Activated CD4-positive, alpha-beta T cell treated with anti-CD3 and anti-CD28 coated beads, Interleukin-2, amount 10 ng/mL, durations not matched to agents 24 days and 14 days (primary cell): ENCODE measurements at regions of chr12 and their contacts with region 1.

Region 1: GRCh38 chr12:57452937-57453509 is 2.1 kb upstream of the INHBE start:
- DNase-seq: peak; percentile 87
- H3K4me3 Mint-ChIP-seq: no peak overlapping the region
- H3K27ac Mint-ChIP-seq: no peak overlapping the region
- H3K4me1 Mint-ChIP-seq: peaks cover 13% of the 10 kb centered on the region
- H3K27me3 Mint-ChIP-seq: no peaks in the 10 kb centered on the region

Region 2: DNA sequence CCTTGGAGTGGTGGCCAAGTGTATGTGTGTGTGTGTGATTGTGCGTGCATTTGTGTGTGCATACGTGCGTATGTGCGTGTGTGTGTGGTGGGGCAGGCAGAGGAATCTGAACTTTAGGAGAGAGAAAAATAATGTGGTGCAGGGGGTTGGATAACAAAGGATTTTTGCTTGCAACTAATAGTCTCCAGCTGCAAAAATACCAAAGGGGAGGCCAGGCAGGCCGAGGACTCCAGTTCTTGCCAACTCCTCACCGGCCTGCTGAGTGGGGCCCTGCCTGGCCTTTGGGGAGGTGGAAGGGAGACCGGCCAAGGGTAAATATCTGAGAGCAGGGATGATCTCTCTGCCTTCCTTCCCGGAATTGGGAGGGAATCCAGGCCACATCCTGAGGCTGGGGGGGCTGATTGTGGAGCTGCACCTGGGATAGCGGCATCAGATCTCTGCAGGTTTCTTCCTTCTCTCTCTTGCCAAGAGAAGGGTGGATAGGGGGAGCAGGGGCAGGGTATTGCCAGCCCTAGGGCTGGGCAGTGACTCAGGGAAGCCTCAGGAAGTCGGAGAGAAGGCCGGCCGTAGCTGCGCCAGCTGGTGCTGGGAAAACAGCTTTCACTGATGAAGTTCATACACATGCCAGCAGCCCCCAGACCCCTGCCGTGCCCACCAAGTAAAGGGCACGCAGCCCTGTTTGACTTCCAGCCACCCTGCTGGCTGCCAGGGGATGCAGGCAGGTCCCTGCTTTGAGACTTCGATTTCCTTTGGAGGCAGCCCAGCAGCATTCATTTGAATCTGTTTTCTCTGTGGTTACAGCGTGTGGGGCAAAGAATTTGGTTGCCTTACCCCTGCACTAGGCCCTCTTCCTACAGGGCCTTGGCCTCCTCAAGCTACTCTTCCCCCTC is 301.0 kb before region 1 on chr12:
- intact Hi-C with region 1: no loop called
- DNase-seq: no peak
- H3K4me3 Mint-ChIP-seq: no peak overlapping the region
- H3K27ac Mint-ChIP-seq: no peak overlapping the region
- H3K4me1 Mint-ChIP-seq: no peaks in the 10 kb centered on the region
- H3K27me3 Mint-ChIP-seq: no peaks in the 10 kb centered on the region

Region 3: GRCh38 chr12:57175428-57176138 is 277.4 kb before region 1 on chr12:
- intact Hi-C with region 1: no loop called
- DNase-seq: peak; percentile 81
- H3K4me3 Mint-ChIP-seq: no peak overlapping the region
- H3K27ac Mint-ChIP-seq: no peak overlapping the region
- H3K4me1 Mint-ChIP-seq: no peaks in the 10 kb centered on the region
- H3K27me3 Mint-ChIP-seq: no peaks in the 10 kb centered on the region

Region 4: GRCh38 chr12:57263096-57263495 is 189.9 kb before region 1 on chr12:
- intact Hi-C with region 1: loop called (anchors 1 kb)
- DNase-seq: no peak
- H3K4me3 Mint-ChIP-seq: no peak overlapping the region
- H3K27ac Mint-ChIP-seq: no peak overlapping the region
- H3K4me1 Mint-ChIP-seq: peaks cover 5% of the 10 kb centered on the region
- H3K27me3 Mint-ChIP-seq: no peaks in the 10 kb centered on the region

Region 5: GRCh38 chr12:57309420-57309819 is 143.6 kb before region 1 on chr12:
- intact Hi-C with region 1: loop called (anchors 1 kb)
- DNase-seq: no peak
- H3K4me3 Mint-ChIP-seq: no peak overlapping the region
- H3K27ac Mint-ChIP-seq: no peak overlapping the region
- H3K4me1 Mint-ChIP-seq: peaks cover 6% of the 10 kb centered on the region
- H3K27me3 Mint-ChIP-seq: no peaks in the 10 kb centered on the region

Region 6: DNA sequence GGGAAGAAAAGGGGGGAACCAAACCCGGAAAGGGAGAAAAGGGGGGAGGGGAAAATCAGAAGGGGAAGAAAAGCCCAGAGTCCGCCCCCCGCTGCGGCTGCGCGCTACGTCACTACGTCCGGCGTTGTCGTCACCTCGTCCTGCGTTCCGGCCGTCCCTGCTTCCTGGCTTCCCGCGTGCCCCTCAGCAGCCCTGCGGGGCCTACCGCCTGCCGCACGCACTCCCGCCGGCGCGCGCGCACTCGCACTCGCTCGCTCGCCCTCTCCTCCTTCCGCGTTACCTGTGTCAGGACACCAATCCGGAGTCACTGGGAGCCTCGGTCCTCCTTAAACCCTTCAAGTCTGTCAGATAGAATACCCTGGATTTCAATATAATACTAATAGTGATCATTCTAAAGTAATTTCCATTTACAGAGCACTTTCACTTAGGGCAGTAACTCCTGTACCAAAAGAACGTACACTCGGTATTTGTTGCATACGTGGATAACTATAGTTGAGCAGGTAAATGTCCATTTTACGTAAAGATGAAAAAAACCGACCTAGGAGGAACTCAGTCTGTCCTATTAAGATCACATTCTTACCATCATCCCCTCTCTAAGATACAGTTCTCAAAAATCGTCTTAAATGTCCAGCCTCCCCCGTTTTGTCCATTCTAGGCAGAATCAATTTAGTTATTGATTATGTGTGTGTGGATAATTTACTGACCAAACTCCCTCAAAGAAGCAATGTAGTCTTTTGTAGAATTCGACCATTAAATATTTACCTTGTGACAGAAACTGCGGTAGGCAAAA is 21.9 kb before region 1 on chr12 and contains the start of gene R3HDM2:
- intact Hi-C with region 1: loop called (anchors 1 kb)
- DNase-seq: peak; percentile 98
- H3K4me3 Mint-ChIP-seq: peak within 1 kb of the TSS; percentile 99
- H3K27ac Mint-ChIP-seq: peak within 1 kb of the TSS; percentile 99
- H3K4me1 Mint-ChIP-seq: peaks cover 33% of the 10 kb centered on the region
- H3K27me3 Mint-ChIP-seq: no peaks in the 10 kb centered on the region
- total RNA-seq, gene R3HDM2: 42.7 and 45.8 TPM in 2 replicates